GM10248 (cell line): ENCODE measurements at regions of chr16 and their contacts with region 1.

Region 1: GRCh38 chr16:414395-415169 is 10.9 kb upstream of the RAB11FIP3 start:
- DNase-seq: peak; percentile 6
- CTCF ChIP-seq: no peak

Region 2: GRCh38 chr16:401468-402348 is 12.9 kb before region 1 on chr16 and contains the start of gene DECR2:
- CTCF ChIA-PET with region 1: interaction called, 4 read pairs
- POLR2A ChIA-PET with region 1: interaction called, 12 read pairs
- DNase-seq: peak; percentile 99
- CTCF ChIP-seq: peak; percentile 54

Region 3: DNA sequence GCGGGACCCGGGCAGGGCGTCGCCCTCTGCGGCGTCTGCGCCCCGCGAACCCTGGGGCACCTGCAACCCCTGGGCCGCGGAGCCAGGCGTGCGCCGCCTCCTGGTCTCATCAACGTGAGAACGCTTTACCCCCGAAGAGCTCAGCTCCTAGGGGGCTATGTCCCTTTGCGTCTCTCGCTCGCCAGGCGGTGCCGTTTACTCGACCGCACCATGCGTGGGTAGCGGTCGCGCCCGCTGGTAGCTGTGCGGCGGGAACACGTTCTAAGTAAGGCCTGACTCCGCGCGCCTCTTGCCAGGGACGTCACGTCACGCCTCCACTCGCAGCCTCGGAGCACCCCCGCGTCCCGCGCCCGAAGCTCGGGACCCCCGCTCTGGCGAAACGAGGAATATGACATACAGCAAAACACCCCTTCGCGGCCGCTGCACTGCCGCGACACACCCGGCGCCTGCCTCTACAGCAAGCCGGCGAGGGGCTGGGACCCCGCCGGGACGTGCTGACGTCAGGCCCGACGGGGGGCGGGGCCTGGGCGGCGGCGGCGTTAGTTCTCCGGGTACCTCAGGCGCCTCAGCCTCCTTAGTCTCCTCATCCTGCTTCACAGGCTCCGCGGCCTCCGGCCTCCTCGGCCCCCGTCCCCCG is 10.6 kb after region 1 on chr16 and contains the start of gene RAB11FIP3:
- CTCF ChIA-PET with region 1: interaction called, 12 read pairs
- POLR2A ChIA-PET with region 1: no interaction called
- DNase-seq: peak; percentile 96
- CTCF ChIP-seq: no peak